ENCODE measurements at regions of chr19 and their contacts with region 1.

Region 1: GRCh38 chr19:38769635-38770211 is 3.6 kb downstream of the LGALS7 start:
- DNase-seq: peak; percentile 92
- H3K4me3 ChIP-seq: peak overlapping the region; percentile 56
- H3K27ac ChIP-seq: peak overlapping the region; percentile 75
- H3K4me1 ChIP-seq: peaks cover 9% of the 10 kb centered on the region
- H3K27me3 ChIP-seq: no peaks in the 10 kb centered on the region
- CTCF ChIP-seq: peak; percentile 84

Region 2: GRCh38 chr19:38831142-38831605 is 61.5 kb after region 1 on chr19:
- intact Hi-C with region 1: loop called (anchors 10 kb)
- DNase-seq: peak; percentile 76
- H3K4me3 ChIP-seq: peak overlapping the region; percentile 82
- H3K27ac ChIP-seq: peak overlapping the region; percentile 97
- H3K4me1 ChIP-seq: peaks cover 74% of the 10 kb centered on the region
- H3K27me3 ChIP-seq: no peaks in the 10 kb centered on the region
- CTCF ChIP-seq: no peak

Measured in left ventricle myocardium inferior (tissue), 1 donor.